Activated CD4-positive, alpha-beta T cell treated with anti-CD3 and anti-CD28 coated beads for 36 hours (primary cell): ENCODE measurements at regions of chr2 and their contacts with region 1.

Region 1: GRCh38 chr2:32063310-32064161 is at the start of gene SPAST:
- DNase-seq: peak; percentile 98
- ATAC-seq: peak; percentile 95
- H3K4me3 Mint-ChIP-seq: peak within 1 kb of the TSS; percentile 97
- H3K27ac Mint-ChIP-seq: peak within 1 kb of the TSS; percentile 94
- H3K4me1 Mint-ChIP-seq: peaks cover 23% of the 10 kb centered on the region
- H3K27me3 Mint-ChIP-seq: no peaks in the 10 kb centered on the region
- total RNA-seq, gene SPAST: 16.8 to 19.5 TPM

Region 2: DNA sequence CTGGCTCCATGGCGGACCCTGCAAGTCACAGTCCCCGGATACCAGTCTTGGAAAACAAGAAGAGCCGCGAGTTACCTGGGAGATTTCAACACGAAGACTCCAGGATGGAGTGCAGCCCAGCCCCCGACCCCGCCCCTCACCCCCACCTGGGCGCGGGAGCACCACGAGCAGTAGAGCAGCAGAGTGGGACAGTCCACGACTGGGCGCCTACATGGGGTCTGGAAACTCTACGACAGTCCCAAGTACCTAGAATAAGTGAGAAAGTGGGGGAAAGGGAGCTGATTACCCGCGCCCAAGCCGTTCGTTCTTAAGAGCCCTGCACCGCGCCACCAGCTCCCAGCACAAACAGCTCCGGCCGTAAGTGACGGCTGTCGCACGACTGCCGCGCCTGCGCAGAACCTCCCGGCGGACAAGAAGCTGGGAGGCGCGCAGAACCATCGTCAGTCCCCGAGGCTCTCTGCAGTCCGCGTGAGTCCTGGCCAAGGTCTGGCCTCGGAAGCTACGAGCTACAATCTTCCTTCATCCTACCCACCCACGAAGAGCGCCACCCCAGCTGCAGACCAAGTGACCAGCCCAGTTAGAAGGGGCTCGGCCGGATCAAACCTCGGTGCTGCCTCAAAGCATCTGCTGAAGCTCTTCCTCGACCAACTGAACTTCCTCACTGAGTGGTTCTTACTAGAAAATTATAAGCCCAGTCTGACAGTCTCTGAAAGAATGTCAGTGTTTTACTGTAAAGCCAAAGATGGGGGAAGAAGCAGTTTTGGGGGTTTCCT is 23.9 kb before region 1 on chr2 and contains the start of gene DPY30:
- CTCF ChIA-PET with region 1: interaction called, 16 read pairs
- POLR2A ChIA-PET with region 1: interaction called, 22 read pairs
- intact Hi-C with region 1: loop called (anchors 1 kb)
- DNase-seq: peak; percentile 95
- ATAC-seq: peak; percentile 94
- H3K4me3 Mint-ChIP-seq: peak within 1 kb of the TSS; percentile 90
- H3K27ac Mint-ChIP-seq: peak within 1 kb of the TSS; percentile 96
- H3K4me1 Mint-ChIP-seq: peaks cover 11% of the 10 kb centered on the region
- H3K27me3 Mint-ChIP-seq: no peaks in the 10 kb centered on the region
- total RNA-seq, gene DPY30: 74.2 to 78.6 TPM

Region 3: DNA sequence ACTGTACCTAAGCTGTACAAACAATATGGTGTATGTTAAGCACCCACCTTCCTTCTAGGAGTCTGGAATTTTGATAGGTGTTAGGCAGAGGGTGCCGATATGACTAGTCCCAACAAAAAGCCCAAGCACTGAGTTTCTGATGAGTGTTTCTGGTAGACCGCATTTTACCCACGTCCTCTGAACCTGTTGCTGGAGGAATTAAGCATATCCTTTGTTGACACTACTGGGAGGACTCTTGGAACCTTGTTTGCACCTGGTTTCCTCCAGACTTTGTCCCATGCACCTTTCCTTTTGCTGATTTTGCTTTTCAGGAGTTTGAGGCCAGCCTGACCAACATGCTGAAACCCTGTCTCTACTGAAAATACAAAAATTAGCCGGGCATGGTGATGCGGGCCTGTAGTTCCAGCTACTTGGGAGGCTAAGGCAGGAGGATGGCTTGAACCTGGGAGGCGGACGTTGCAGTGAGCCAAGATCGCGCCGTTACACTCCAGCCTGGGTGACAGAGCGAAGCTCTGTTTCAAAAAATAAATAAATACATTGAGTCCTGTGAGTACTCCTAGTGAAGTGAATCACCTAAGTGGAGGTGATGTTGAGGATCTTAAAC is 11.6 kb before region 1 on chr2:
- CTCF ChIA-PET with region 1: no interaction called
- POLR2A ChIA-PET with region 1: no interaction called
- intact Hi-C with region 1: no loop called
- DNase-seq: no peak
- ATAC-seq: no peak
- H3K4me3 Mint-ChIP-seq: no peak overlapping the region
- H3K27ac Mint-ChIP-seq: no peak overlapping the region
- H3K4me1 Mint-ChIP-seq: peaks cover 3% of the 10 kb centered on the region
- H3K27me3 Mint-ChIP-seq: no peaks in the 10 kb centered on the region

Region 4: DNA sequence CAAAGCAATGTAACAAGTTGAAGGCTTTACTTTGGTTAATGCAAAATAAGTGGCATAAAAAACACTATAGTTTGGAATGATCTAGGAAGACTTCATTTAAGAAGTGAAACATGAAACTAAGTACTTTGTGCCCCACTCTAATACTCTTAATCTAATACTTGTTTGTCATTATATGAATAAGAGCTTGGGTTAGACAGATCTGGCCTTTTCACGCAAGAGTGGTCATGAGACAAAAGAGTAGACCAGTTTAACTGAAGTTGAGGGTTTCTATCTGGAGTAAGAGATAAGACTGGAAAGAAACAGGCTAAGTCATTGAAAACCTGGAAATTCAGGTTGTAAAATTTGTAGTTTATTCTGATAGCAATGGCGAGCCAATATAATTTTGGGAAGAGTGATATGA is 105.0 kb after region 1 on chr2:
- CTCF ChIA-PET with region 1: interaction called, 6 read pairs
- POLR2A ChIA-PET with region 1: interaction called, 5 read pairs
- intact Hi-C with region 1: loop called (anchors 1 to 2 kb)
- DNase-seq: no peak
- ATAC-seq: no peak
- H3K4me3 Mint-ChIP-seq: no peak overlapping the region
- H3K27ac Mint-ChIP-seq: peak overlapping the region; percentile 38
- H3K4me1 Mint-ChIP-seq: peaks cover 39% of the 10 kb centered on the region
- H3K27me3 Mint-ChIP-seq: no peaks in the 10 kb centered on the region

Region 5: GRCh38 chr2:32277674-32278482 is 214.3 kb after region 1 on chr2 and contains the start of gene YIPF4:
- CTCF ChIA-PET with region 1: no interaction called
- POLR2A ChIA-PET with region 1: interaction called, 6 read pairs
- intact Hi-C with region 1: loop called in 1 of 2 experiments (anchors 1 kb)
- DNase-seq: peak; percentile 89
- ATAC-seq: peak; percentile 99
- H3K4me3 Mint-ChIP-seq: peak within 1 kb of the TSS; percentile 94
- H3K27ac Mint-ChIP-seq: peak within 1 kb of the TSS; percentile 93
- H3K4me1 Mint-ChIP-seq: peaks cover 24% of the 10 kb centered on the region
- H3K27me3 Mint-ChIP-seq: no peaks in the 10 kb centered on the region
- total RNA-seq, gene YIPF4: 17.5 to 37.6 TPM